IMR-90 (cell line): ENCODE measurements at regions of chr16 and their contacts with region 1.

Region 1: DNA sequence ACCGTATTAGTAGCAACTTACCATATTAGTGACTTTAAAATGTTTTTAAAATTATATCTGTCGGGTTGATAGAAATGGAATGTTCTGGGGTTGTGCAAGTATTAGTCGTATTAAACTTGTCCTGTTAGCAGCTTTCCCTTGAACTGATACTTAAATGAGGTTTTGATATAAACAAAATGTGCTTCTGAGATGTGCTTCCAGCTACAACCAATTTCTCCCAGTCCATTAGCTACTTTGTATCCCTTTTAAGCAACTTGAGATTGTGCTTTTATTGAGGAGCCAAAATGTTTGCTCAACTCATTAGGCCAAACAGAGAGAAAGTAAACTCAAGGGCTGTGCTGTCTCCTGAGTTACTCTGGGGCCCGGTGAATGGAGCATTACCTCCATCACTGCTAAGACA is 255.0 kb upstream of the RBFOX1 start:
- DNase-seq: no peak
- ATAC-seq: no peak
- H3K4me3 ChIP-seq: no peak overlapping the region
- H3K27ac ChIP-seq: no peak overlapping the region
- H3K4me1 ChIP-seq: no peaks in the 10 kb centered on the region
- H3K27me3 ChIP-seq: no peaks in the 10 kb centered on the region
- CTCF ChIP-seq: no peak
- POLR2A ChIP-seq: no peak
- RAD21 ChIP-seq: no peak

Region 2: GRCh38 chr16:7124701-7125100 is 47.1 kb after region 1 on chr16:
- CTCF ChIA-PET with region 1: no interaction called
- POLR2A ChIA-PET with region 1: no interaction called
- dilution Hi-C with region 1: no loop called
- in situ Hi-C with region 1: no loop called
- intact Hi-C with region 1: loop called (anchors 2 kb)
- DNase-seq: no peak
- ATAC-seq: no peak
- H3K4me3 ChIP-seq: no peak overlapping the region
- H3K27ac ChIP-seq: no peak overlapping the region
- H3K4me1 ChIP-seq: no peaks in the 10 kb centered on the region
- H3K27me3 ChIP-seq: no peaks in the 10 kb centered on the region
- CTCF ChIP-seq: no peak
- POLR2A ChIP-seq: no peak
- RAD21 ChIP-seq: no peak